Activated B cell treated with CpG ODN at 0.5 μM for 24 hours (primary cell): ENCODE measurements at regions of chr2 and their contacts with region 1.

Region 1: GRCh38 chr2:208254871-208255556 is at the start of gene IDH1:
- DNase-seq: peak; percentile 99
- ATAC-seq: peak; percentile 79
- H3K4me3 Mint-ChIP-seq: peak within 1 kb of the TSS; percentile 100
- H3K27ac Mint-ChIP-seq: peak within 1 kb of the TSS; percentile 88
- H3K4me1 Mint-ChIP-seq: peaks cover 48% of the 10 kb centered on the region
- H3K27me3 Mint-ChIP-seq: no peaks in the 10 kb centered on the region
- CTCF ChIP-seq: no peak
- total RNA-seq, gene IDH1: 36.9 and 46.6 TPM in 2 replicates

Region 2: DNA sequence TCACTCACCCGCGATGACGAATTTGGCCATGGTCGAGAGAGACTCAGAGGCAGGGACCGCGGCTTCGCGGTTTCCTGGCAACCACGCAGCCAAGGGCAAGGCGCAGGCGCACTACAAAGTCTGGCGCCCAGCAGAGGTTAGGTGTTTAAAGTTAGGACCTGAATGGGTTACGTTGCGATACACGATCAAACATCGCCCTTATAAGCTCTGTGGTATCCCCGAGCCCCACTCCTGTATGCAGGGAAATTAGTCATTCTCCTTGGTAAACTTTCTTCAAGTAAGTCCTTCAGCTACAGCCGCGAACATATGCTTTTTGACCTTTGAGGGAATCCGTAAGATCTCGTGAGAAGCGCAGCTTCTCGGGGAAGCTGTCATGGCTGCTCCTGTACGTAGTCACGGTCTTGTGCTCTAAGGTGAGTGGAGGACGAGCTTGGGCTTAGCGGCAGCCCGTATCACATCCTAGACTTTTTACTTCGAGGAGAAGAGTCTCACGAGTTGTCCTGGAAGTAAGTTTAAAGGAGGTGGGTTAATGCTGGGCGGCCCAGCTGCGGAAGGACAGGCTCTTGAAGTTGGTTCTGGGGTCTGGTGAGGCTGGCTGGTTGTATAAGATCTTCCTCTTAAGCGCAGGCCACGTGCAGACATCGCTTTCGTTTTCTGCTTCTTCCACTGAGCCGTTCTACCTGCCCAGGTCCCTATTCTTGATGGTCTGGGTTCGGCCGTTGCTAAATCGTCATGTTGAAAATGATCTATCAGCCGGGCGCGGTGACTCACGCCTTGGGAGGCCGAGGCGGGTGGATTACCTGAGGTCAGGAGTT is 1489.6 kb before region 1 on chr2 and contains the starts of genes FASTKD2 and MDH1B:
- CTCF ChIA-PET with region 1: no interaction called
- POLR2A ChIA-PET with region 1: no interaction called
- intact Hi-C with region 1: loop called (anchors 1 kb)
- DNase-seq: peak; percentile 77
- ATAC-seq: peak; percentile 87
- H3K4me3 Mint-ChIP-seq: peak within 1 kb of the TSS; percentile 94
- H3K27ac Mint-ChIP-seq: peak within 1 kb of the TSS; percentile 96
- H3K4me1 Mint-ChIP-seq: peaks cover 34% of the 10 kb centered on the region
- H3K27me3 Mint-ChIP-seq: peaks cover 3% of the 10 kb centered on the region
- CTCF ChIP-seq: no peak
- total RNA-seq, gene FASTKD2: 29.1 and 29.6 TPM in 2 replicates
- total RNA-seq, gene MDH1B: not detected in 2 replicates

Region 3: DNA sequence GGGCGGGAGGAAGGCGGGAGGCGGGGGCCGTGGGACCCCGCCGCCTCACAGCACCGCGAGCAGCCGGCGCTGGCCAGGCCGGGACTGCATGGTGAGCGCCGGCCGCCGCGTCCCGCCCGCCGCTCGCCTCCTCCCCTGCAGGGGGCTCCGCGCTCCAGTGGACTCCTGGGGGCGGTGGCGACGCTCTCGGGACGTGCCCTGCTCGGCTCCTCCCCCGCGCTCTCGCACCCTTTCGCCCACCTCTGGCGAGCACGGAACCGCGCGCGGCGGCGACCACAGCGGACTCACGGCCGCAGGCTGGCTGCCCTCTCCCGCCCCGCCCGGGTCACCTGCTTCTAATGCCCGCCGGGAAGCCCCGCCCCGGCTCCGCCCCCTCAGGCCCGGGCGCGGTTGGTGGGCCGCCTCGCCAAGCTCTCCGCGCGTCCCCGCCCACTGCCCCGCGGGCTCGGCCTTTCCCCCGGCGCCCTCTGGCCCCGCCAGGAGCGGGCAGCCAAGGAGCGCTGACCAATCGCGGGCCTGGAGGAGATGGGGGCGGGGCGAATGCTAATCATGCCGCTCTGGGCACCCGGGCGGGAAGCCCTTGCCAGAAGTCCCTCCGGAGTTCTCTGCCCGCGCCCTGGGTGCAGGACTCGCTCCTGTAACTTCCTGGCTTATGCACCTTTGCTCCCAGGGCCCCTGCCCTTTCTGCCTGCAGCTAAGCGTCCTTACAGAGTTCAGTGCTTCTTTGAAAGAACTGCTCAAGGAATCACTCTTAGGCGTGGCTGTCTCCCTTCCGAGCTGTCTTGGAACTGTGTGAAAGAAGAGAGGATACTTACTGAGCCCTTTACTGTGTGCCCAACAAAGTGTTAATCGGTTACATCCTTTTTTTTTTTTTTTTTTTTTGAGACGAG is 485.2 kb before region 1 on chr2 and contains the start of gene FZD5:
- CTCF ChIA-PET with region 1: no interaction called
- POLR2A ChIA-PET with region 1: no interaction called
- intact Hi-C with region 1: loop called (anchors 2 kb)
- DNase-seq: peak; percentile 93
- ATAC-seq: peak; percentile 91
- H3K4me3 Mint-ChIP-seq: peak within 1 kb of the TSS; percentile 87
- H3K27ac Mint-ChIP-seq: no peak within 1 kb of the TSS
- H3K4me1 Mint-ChIP-seq: peaks cover 36% of the 10 kb centered on the region
- H3K27me3 Mint-ChIP-seq: peaks cover 7% of the 10 kb centered on the region
- CTCF ChIP-seq: no peak
- total RNA-seq, gene FZD5: 0.66 and 0.89 TPM in 2 replicates

Region 4: DNA sequence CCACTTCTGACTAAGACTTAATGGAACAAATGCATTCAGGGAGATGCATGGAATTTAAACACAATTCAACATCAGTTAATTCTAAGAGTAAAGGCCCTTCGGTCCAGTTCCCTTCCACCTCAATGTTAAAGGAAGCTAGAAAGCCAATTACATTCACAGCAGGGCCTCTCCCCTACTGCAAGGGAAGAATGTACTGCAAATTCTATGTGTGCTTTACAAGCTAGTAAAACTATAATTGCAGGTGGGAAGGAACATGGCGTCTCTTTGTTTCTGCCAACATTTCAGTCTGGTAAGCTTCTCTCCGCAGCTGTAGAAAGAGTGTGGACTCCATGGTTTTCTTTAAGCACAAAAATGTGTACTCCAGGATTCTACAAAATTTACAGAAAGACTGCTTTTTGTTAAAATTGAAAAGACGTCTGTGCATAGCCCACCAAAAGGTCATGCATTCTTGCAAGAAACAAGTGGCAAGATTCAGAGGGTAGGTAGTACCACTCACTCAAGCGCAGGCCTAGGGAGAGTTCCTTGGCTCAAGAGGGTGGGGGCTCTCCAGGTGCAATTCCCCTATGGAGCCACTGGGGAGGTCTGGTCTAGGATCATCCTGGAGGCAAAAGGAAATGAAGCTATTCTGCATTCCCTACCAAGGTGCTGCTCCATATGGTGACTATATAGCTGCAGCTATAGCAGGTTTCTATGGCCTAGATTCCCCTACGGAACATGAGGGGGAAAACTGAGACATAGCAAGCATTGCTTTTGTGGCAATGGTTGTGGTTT is 358.3 kb before region 1 on chr2:
- CTCF ChIA-PET with region 1: no interaction called
- POLR2A ChIA-PET with region 1: no interaction called
- intact Hi-C with region 1: no loop called
- DNase-seq: no peak
- ATAC-seq: no peak
- H3K4me3 Mint-ChIP-seq: no peak overlapping the region
- H3K27ac Mint-ChIP-seq: no peak overlapping the region
- H3K4me1 Mint-ChIP-seq: no peaks in the 10 kb centered on the region
- H3K27me3 Mint-ChIP-seq: no peaks in the 10 kb centered on the region
- CTCF ChIP-seq: no peak

Region 5: GRCh38 chr2:208294482-208295024 is 39.5 kb after region 1 on chr2:
- CTCF ChIA-PET with region 1: interaction called, 3 read pairs
- POLR2A ChIA-PET with region 1: no interaction called
- intact Hi-C with region 1: loop called (anchors 1 kb)
- DNase-seq: no peak
- ATAC-seq: peak; percentile 85
- H3K4me3 Mint-ChIP-seq: peak overlapping the region; percentile 52
- H3K27ac Mint-ChIP-seq: peak overlapping the region; percentile 90
- H3K4me1 Mint-ChIP-seq: peaks cover 65% of the 10 kb centered on the region
- H3K27me3 Mint-ChIP-seq: no peaks in the 10 kb centered on the region
- CTCF ChIP-seq: no peak

Region 6: DNA sequence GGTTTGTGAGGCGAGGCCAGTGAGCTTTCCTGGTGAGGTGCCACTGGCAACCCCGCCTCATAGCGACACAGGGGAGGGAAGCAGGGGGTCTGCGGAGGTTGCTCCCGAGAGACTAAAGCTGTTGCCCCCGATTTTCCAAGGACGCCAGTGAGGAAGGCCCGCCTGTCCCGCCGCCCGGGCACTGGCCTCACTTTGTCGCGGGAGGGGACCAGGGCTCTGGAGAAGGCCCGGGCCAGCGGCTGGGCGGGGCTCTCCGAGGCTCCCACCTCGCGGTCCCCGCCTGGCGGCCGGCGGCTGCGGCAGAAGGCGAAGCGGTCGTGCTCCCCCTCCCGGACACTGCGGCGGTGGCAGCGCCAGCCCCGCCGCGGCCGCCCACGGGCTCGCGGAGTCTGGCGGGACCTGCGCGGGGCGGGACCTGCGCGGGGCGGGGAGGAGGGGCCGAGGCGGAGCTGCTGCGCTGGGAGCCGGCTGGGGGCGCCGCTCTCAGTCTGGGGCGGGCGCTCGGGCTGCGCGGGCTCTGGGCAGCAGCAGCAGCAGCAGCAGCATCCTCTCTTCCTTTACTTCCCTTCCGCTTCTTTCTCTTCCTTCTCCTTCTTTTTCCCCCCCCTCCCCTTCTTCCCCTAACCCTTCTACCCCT is 1168.7 kb after region 1 on chr2 and contains the start of gene MAP2:
- CTCF ChIA-PET with region 1: no interaction called
- POLR2A ChIA-PET with region 1: no interaction called
- intact Hi-C with region 1: loop called (anchors 5 kb)
- DNase-seq: peak; percentile 85
- ATAC-seq: peak; percentile 98
- H3K4me3 Mint-ChIP-seq: peak within 1 kb of the TSS; percentile 87
- H3K27ac Mint-ChIP-seq: no peak within 1 kb of the TSS
- H3K4me1 Mint-ChIP-seq: peaks cover 24% of the 10 kb centered on the region
- H3K27me3 Mint-ChIP-seq: peaks cover 4% of the 10 kb centered on the region
- CTCF ChIP-seq: peak; percentile 20
- total RNA-seq, gene MAP2: 1.4 and 1.9 TPM in 2 replicates

Region 7: DNA sequence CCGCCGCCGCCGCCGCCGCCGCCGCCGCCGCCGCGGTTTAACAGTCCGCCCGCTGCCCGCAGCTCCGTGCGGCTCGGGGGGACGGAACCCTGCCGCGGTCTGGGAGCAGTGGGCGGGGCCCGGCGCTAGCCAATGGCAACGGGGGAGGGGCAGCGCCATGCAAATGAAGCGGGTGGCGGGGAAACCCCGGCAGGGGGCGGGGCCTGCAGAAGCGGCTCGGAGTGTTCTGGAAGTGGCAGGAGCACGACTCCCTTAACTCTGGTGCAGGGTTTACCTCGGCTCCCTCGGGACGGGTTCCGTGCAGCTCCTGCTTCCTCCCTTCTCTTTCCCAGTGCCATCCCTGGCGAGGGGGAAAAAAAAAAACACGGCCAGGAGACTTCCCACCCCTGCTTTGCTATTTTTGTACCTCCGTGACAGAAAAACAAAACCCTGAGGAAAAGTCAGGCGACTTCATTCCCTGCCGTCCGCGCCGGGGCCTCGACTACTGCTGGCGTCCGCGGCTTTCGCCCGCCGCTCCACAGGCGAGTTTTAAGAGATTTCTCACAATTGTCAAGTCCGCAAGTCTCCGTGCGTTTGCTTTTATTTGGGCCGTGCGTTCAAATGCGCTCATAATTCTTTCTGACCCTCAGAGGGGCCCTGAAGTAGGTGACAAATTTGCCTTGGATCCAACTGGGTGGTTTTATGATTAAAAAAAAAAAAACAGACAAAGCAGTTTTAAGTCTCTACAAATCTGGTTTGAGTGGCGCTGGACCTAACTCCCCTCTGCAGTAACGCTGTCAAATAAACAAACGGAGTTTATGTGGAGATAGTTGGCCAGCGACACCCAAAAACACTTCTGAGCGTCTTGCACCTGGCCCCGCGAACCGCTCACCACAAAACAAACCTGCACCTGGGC is 1916.5 kb after region 1 on chr2 and contains the start of gene KANSL1L:
- CTCF ChIA-PET with region 1: no interaction called
- POLR2A ChIA-PET with region 1: interaction called, 3 read pairs
- intact Hi-C with region 1: loop called (anchors 2 kb)
- DNase-seq: peak; percentile 99
- ATAC-seq: peak; percentile 83
- H3K4me3 Mint-ChIP-seq: peak within 1 kb of the TSS; percentile 97
- H3K27ac Mint-ChIP-seq: peak within 1 kb of the TSS; percentile 94
- H3K4me1 Mint-ChIP-seq: peaks cover 24% of the 10 kb centered on the region
- H3K27me3 Mint-ChIP-seq: peaks cover 8% of the 10 kb centered on the region
- CTCF ChIP-seq: no peak
- total RNA-seq, gene KANSL1L: 13.1 and 14.2 TPM in 2 replicates